Activated B cell treated with CpG ODN at 0.5 μM for 24 hours (primary cell): ENCODE measurements at regions of chr1 and their contacts with region 1.

Region 1: GRCh38 chr1:154272217-154272998 is at the start of gene HAX1:
- DNase-seq: peak; percentile 88
- ATAC-seq: peak; percentile 93
- H3K4me3 Mint-ChIP-seq: peak within 1 kb of the TSS; percentile 96
- H3K27ac Mint-ChIP-seq: peak within 1 kb of the TSS; percentile 97
- H3K4me1 Mint-ChIP-seq: peaks cover 39% of the 10 kb centered on the region
- H3K27me3 Mint-ChIP-seq: no peaks in the 10 kb centered on the region
- CTCF ChIP-seq: peak; percentile 46
- total RNA-seq, gene HAX1: 89.4 and 93.0 TPM in 2 replicates

Region 2: DNA sequence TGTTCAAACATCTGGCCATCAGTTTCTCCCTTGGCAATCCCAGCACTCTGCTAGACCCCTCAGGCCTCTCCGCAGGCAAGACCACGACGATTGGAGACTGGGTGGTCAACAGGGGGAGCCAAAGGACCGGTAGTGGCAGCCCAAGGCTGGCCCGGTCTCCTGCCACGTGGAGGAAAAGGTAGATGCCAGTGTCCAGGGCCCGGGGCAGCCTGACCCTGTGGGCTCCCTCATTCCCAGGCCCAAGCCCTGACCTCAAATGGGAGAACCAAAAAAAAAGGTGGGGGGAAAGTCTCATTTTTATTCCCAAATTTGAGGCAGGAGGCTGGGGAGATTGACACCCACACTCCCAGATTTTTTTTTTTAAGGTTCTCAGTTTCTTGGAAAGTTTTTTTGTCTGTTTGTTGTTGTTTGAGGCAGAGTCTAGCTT is 761.4 kb before region 1 on chr1:
- CTCF ChIA-PET with region 1: no interaction called
- POLR2A ChIA-PET with region 1: no interaction called
- intact Hi-C with region 1: loop called (anchors 2 kb)
- DNase-seq: peak; percentile 67
- ATAC-seq: peak; percentile 97
- H3K4me3 Mint-ChIP-seq: no peak overlapping the region
- H3K27ac Mint-ChIP-seq: no peak overlapping the region
- H3K4me1 Mint-ChIP-seq: peaks cover 4% of the 10 kb centered on the region
- H3K27me3 Mint-ChIP-seq: no peaks in the 10 kb centered on the region
- CTCF ChIP-seq: peak; percentile 81

Region 3: DNA sequence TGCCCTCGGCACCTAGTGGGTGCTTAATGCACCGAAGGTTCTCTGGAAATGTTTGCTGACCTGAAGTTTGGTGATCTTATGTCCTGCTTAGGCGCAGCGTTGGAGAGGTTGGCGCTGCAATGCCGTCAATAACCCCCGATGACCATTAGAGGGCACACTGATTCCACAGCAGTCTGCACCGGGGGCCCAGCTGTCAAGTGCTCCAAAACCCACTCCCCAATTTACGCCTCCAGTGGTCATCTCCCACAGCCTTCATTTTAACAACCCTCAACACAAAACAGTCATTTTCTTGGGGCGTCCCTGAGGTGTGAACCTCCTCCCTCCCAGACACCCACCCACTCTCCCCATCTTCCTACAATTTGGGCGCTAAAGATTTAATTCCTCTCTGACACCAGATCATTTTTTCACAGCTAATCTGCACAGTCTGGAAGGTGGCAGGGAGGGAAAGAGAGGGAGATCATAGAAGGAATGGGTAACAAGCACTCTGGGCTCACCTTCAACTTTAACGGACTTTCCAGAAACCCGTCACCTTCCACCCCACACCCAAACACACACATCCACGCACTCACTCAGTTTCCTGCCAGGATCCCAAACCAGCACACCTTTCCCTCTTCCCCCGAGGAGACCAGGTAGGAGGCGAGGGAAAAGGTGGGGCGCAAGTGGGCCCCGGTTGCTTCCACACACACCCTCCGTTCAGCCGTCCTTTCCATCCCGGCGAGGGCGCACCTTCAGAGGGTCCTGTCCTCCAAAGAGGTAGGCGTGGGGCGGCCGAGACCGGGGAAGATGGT is 594.5 kb before region 1 on chr1:
- CTCF ChIA-PET with region 1: no interaction called
- POLR2A ChIA-PET with region 1: no interaction called
- intact Hi-C with region 1: loop called (anchors 1 kb)
- DNase-seq: peak; percentile 40
- ATAC-seq: peak; percentile 67
- H3K4me3 Mint-ChIP-seq: peak overlapping the region; percentile 86
- H3K27ac Mint-ChIP-seq: no peak overlapping the region
- H3K4me1 Mint-ChIP-seq: peaks cover 21% of the 10 kb centered on the region
- H3K27me3 Mint-ChIP-seq: peaks cover 31% of the 10 kb centered on the region
- CTCF ChIP-seq: peak; percentile 73

Region 4: GRCh38 chr1:153958111-153958960 is 314.1 kb before region 1 on chr1 and contains the start of gene CRTC2:
- CTCF ChIA-PET with region 1: no interaction called
- POLR2A ChIA-PET with region 1: no interaction called
- intact Hi-C with region 1: loop called (anchors 2 kb)
- DNase-seq: peak; percentile 92
- ATAC-seq: peak; percentile 83
- H3K4me3 Mint-ChIP-seq: peak within 1 kb of the TSS; percentile 96
- H3K27ac Mint-ChIP-seq: peak within 1 kb of the TSS; percentile 96
- H3K4me1 Mint-ChIP-seq: peaks cover 77% of the 10 kb centered on the region
- H3K27me3 Mint-ChIP-seq: no peaks in the 10 kb centered on the region
- CTCF ChIP-seq: no peak
- total RNA-seq, gene CRTC2: 206 and 247 TPM in 2 replicates

Region 5: GRCh38 chr1:154220071-154220969 is 52.1 kb before region 1 on chr1 and contains the start of gene UBAP2L:
- CTCF ChIA-PET with region 1: no interaction called
- POLR2A ChIA-PET with region 1: interaction called, 14 read pairs
- intact Hi-C with region 1: loop called (anchors 1 kb)
- DNase-seq: peak; percentile 98
- ATAC-seq: peak; percentile 84
- H3K4me3 Mint-ChIP-seq: peak within 1 kb of the TSS; percentile 99
- H3K27ac Mint-ChIP-seq: peak within 1 kb of the TSS; percentile 100
- H3K4me1 Mint-ChIP-seq: peaks cover 75% of the 10 kb centered on the region
- H3K27me3 Mint-ChIP-seq: no peaks in the 10 kb centered on the region
- CTCF ChIP-seq: no peak
- total RNA-seq, gene UBAP2L: 209 and 234 TPM in 2 replicates

Region 6: GRCh38 chr1:154404984-154405761 is 132.8 kb after region 1 on chr1 and contains the start of gene IL6R:
- CTCF ChIA-PET with region 1: no interaction called
- POLR2A ChIA-PET with region 1: no interaction called
- intact Hi-C with region 1: loop called (anchors 1 kb)
- DNase-seq: peak; percentile 68
- ATAC-seq: peak; percentile 60
- H3K4me3 Mint-ChIP-seq: peak within 1 kb of the TSS; percentile 81
- H3K27ac Mint-ChIP-seq: peak within 1 kb of the TSS; percentile 86
- H3K4me1 Mint-ChIP-seq: peaks cover 55% of the 10 kb centered on the region
- H3K27me3 Mint-ChIP-seq: no peaks in the 10 kb centered on the region
- CTCF ChIP-seq: no peak
- total RNA-seq, gene IL6R: 3.3 and 5.1 TPM in 2 replicates